HEK293 (cell line): ENCODE measurements at regions of chr7 and their contacts with region 1.

Region 1: DNA sequence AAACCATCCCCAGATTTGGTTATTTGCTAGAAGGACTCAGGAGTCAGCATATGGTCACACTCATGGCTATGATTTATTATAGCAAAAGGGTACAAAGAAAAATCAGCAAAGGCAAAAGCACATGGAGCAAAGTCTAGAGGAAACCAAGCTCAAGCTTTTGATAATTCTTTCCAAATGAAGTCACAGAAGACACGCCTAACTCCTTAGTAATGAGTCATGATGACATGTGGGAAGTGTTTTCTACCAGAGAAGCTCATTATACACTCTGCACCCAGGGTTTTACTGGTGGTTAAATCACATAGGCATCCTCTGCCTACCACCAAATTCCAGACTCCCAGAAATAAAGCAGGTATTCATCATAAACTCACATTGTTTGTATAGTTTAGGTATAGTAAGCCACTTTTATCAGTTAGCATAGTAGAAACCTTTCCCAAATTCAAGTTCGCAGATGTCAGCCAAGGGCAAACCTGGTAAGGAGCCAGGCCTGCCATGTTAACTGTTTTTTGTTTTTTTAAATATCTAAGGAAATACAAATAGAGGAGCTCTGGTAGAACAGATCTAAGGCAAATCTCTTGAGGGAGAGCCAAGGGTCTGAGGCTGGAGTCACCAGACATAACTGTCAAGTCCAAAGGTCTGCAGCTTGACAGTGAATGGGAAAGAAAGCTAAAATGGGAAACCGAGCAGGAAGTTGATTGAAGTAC is 15.4 kb upstream of the HIBADH start:
- H3K4me3 ChIP-seq: no peak overlapping the region
- H3K27ac ChIP-seq: no peak overlapping the region
- H3K4me1 ChIP-seq: peaks cover 3% of the 10 kb centered on the region
- CTCF ChIP-seq: no peak

Region 2: DNA sequence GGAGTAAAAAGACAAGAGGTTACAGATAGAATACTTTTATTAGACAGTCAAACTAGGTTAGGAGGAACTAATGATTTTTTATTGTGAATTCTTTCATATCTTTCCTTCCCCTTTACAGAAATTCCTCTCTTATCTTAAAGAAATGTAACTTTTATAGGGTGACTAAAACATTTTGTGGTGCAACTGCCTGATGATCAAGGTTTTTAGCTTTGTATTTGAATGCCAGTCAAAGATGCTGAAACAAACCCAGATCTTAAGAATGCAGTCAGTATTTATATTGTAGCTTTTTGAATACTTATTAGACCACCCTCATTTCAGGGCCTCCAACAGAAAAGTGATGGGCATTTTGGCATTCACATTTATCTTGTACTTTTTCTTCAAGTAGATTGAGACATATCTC is 89.3 kb after region 1 on chr7:
- CTCF ChIA-PET with region 1: interaction called, 10 read pairs
- POLR2A ChIA-PET with region 1: no interaction called
- H3K4me3 ChIP-seq: no peak overlapping the region
- H3K27ac ChIP-seq: no peak overlapping the region
- H3K4me1 ChIP-seq: peaks cover 7% of the 10 kb centered on the region
- CTCF ChIP-seq: no peak